ENCODE measurements at regions of chr12 and their contacts with region 1.

Region 1: GRCh38 chr12:33977887-33978286 is 44.4 kb upstream of the ALG10 start:
- DNase-seq: no peak
- H3K4me3 ChIP-seq: no peak overlapping the region
- H3K4me3 Mint-ChIP-seq: no peak overlapping the region
- H3K27ac Mint-ChIP-seq: no peak overlapping the region
- H3K4me1 ChIP-seq: peaks cover 2% of the 10 kb centered on the region; the same call in 1 of the 2 replicates
- H3K4me1 Mint-ChIP-seq: no peaks in the 10 kb centered on the region
- H3K27me3 ChIP-seq: no peaks in the 10 kb centered on the region
- H3K27me3 Mint-ChIP-seq: peaks cover 7% of the 10 kb centered on the region
- CTCF ChIP-seq: no peak

Region 2: GRCh38 chr12:33942172-33942571 is 35.7 kb before region 1 on chr12:
- CTCF ChIA-PET with region 1: no interaction called
- POLR2A ChIA-PET with region 1: no interaction called
- intact Hi-C with region 1: loop called (anchors 1 kb)
- DNase-seq: no peak
- H3K4me3 ChIP-seq: no peak overlapping the region
- H3K4me3 Mint-ChIP-seq: no peak overlapping the region
- H3K27ac Mint-ChIP-seq: no peak overlapping the region
- H3K4me1 ChIP-seq: peaks cover 23% of the 10 kb centered on the region
- H3K4me1 Mint-ChIP-seq: peaks cover 11% of the 10 kb centered on the region
- H3K27me3 ChIP-seq: no peaks in the 10 kb centered on the region
- H3K27me3 Mint-ChIP-seq: no peaks in the 10 kb centered on the region
- CTCF ChIP-seq: peak; percentile 57 to 62

Region 3: DNA sequence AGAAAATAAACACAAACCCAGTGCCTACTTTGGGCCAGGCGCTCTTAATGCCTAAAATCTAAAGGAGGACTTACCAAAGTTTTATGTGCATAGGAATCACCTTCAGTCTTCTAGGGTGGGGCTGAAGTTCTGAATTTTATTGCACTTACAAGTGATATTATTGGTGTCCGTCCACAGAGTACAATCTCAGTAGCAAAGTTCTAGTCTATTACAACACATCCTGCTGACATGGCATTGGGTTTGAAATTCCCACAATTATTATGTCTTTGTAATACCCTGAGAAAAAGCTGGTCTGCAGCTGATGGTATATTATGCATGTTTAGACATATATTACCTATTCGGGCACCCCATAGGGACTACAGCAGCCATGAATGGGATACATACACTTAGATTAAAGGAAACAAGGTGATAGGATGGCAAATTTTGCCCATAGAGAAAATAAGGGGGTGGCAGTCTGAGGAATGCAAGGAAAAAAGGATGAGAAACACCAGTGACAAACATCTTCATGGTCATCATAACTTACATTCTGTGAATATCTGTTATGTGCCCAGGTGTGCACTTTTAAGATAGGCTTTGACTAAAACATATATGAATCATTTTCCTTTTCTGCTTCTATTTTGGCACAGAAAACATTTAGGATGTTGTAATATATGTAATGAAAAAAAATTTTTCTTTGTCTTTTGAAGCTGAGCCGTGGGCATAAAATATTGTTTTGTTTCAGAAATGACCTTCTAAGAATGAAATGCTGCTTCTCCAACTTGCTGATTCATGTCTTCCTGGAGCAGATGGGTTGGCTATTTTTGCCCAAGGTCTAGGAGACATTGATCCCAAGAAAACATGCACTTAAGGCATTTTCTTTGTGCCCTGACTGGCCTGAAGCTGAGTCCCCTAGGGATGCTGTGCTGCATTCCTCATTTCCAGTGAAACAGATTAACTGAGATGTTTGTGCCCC is 17.2 kb after region 1 on chr12:
- CTCF ChIA-PET with region 1: no interaction called
- POLR2A ChIA-PET with region 1: no interaction called
- intact Hi-C with region 1: no loop called
- DNase-seq: no peak
- H3K4me3 ChIP-seq: no peak overlapping the region
- H3K4me3 Mint-ChIP-seq: no peak overlapping the region
- H3K27ac Mint-ChIP-seq: no peak overlapping the region
- H3K4me1 ChIP-seq: no peaks in the 10 kb centered on the region
- H3K4me1 Mint-ChIP-seq: no peaks in the 10 kb centered on the region
- H3K27me3 ChIP-seq: no peaks in the 10 kb centered on the region
- H3K27me3 Mint-ChIP-seq: peaks cover 3% of the 10 kb centered on the region
- CTCF ChIP-seq: no peak

Measured in Caco-2 (cell line).